Natural killer cell (primary cell): ENCODE measurements at regions of chrX and their contacts with region 1.

Region 1: GRCh38 chrX:7132335-7133049 is 15.0 kb upstream of the STS start:
- DNase-seq: peak in 1 of 2 donors; percentile 45
- ATAC-seq: peak in 1 of 3 donors; percentile 64
- H3K4me3 ChIP-seq: no peak overlapping the region
- H3K4me3 Mint-ChIP-seq: no peak overlapping the region
- H3K27ac ChIP-seq: no peak overlapping the region
- H3K27ac Mint-ChIP-seq: peak overlapping the region; percentile 60 to 79
- H3K4me1 ChIP-seq: peaks cover 14% of the 10 kb centered on the region
- H3K4me1 Mint-ChIP-seq: peaks cover 22 to 35% of the 10 kb centered on the region in 2 donors
- H3K27me3 ChIP-seq: no peaks in the 10 kb centered on the region
- H3K27me3 Mint-ChIP-seq: no peaks in the 10 kb centered on the region
- CTCF ChIP-seq: no peak

Region 2: DNA sequence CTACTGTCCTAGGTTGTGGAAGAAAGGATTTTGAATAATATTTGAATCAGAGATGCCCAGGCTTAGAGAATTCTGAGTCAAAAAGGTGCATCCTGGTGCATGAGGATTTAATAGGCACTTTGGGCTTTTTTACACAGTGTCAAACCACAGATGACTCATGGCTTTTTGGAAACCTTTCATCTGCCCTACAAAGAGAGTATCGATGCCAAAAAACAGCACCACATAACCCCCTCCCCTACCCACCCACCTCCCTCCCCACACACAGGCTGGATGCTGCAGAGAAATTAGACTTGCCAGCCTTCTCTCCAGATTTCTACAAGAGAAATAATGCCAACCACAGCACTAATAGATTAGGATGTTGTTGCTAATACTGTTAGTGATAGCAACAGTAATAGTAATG is 1683.2 kb before region 1 on chrX:
- intact Hi-C with region 1: no loop called
- DNase-seq: no peak
- ATAC-seq: no peak
- H3K4me3 ChIP-seq: no peak overlapping the region
- H3K4me3 Mint-ChIP-seq: no peak overlapping the region
- H3K27ac ChIP-seq: no peak overlapping the region
- H3K27ac Mint-ChIP-seq: no peak overlapping the region
- H3K4me1 ChIP-seq: no peaks in the 10 kb centered on the region
- H3K4me1 Mint-ChIP-seq: no peaks in the 10 kb centered on the region
- H3K27me3 ChIP-seq: no peaks in the 10 kb centered on the region
- H3K27me3 Mint-ChIP-seq: no peaks in the 10 kb centered on the region
- CTCF ChIP-seq: no peak

Region 3: DNA sequence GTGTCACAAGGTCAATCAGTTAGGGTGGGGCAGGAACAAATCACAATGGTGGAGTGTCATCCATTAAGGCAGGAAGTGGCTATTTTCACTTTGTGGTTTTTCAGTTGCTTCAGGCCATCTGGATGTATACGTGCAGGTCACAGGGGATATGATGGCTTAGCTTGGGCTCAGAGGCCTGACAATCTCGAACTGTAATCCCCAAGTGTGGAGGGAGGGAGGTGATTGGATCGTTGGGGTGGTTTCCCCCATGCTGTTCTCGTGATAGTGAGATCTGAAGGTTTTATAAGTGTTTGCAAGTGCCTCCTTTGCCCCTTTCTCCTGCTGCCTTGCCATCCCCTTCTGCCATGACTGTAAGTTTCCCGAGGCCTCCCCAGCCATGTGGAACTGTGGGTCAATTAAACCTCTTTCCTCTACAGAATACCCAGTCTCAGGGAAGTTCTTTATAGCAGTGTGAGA is 21.6 kb before region 1 on chrX:
- intact Hi-C with region 1: no loop called
- DNase-seq: no peak
- ATAC-seq: peak in 1 of 3 donors; percentile 41
- H3K4me3 ChIP-seq: no peak overlapping the region
- H3K4me3 Mint-ChIP-seq: peak overlapping the region; percentile 33
- H3K27ac ChIP-seq: no peak overlapping the region
- H3K27ac Mint-ChIP-seq: peak overlapping the region in 1 of 2 donors; percentile 87
- H3K4me1 ChIP-seq: peaks cover 17% of the 10 kb centered on the region
- H3K4me1 Mint-ChIP-seq: peaks cover 35 to 37% of the 10 kb centered on the region in 2 donors
- H3K27me3 ChIP-seq: no peaks in the 10 kb centered on the region
- H3K27me3 Mint-ChIP-seq: no peaks in the 10 kb centered on the region
- CTCF ChIP-seq: no peak

Region 4: GRCh38 chrX:7170903-7171302 is 38.4 kb after region 1 on chrX:
- intact Hi-C with region 1: loop called (anchors 1 kb)
- DNase-seq: peak; percentile 15 to 48
- ATAC-seq: peak in 2 of 3 donors; percentile 57 to 68
- H3K4me3 ChIP-seq: no peak overlapping the region
- H3K4me3 Mint-ChIP-seq: no peak overlapping the region
- H3K27ac ChIP-seq: no peak overlapping the region
- H3K27ac Mint-ChIP-seq: no peak overlapping the region
- H3K4me1 ChIP-seq: no peaks in the 10 kb centered on the region
- H3K4me1 Mint-ChIP-seq: no peaks in the 10 kb centered on the region
- H3K27me3 ChIP-seq: no peaks in the 10 kb centered on the region
- H3K27me3 Mint-ChIP-seq: no peaks in the 10 kb centered on the region
- CTCF ChIP-seq: peak; percentile 31

Region 5: GRCh38 chrX:7412840-7413239 is 280.3 kb after region 1 on chrX:
- intact Hi-C with region 1: no loop called
- DNase-seq: no peak
- ATAC-seq: no peak
- H3K4me3 ChIP-seq: no peak overlapping the region
- H3K4me3 Mint-ChIP-seq: no peak overlapping the region
- H3K27ac ChIP-seq: no peak overlapping the region
- H3K27ac Mint-ChIP-seq: no peak overlapping the region
- H3K4me1 ChIP-seq: no peaks in the 10 kb centered on the region
- H3K4me1 Mint-ChIP-seq: no peaks in the 10 kb centered on the region
- H3K27me3 ChIP-seq: no peaks in the 10 kb centered on the region
- H3K27me3 Mint-ChIP-seq: no peaks in the 10 kb centered on the region
- CTCF ChIP-seq: no peak